HEK293T (cell line): ENCODE measurements at regions of chr20 and their contacts with region 1.

Region 1: DNA sequence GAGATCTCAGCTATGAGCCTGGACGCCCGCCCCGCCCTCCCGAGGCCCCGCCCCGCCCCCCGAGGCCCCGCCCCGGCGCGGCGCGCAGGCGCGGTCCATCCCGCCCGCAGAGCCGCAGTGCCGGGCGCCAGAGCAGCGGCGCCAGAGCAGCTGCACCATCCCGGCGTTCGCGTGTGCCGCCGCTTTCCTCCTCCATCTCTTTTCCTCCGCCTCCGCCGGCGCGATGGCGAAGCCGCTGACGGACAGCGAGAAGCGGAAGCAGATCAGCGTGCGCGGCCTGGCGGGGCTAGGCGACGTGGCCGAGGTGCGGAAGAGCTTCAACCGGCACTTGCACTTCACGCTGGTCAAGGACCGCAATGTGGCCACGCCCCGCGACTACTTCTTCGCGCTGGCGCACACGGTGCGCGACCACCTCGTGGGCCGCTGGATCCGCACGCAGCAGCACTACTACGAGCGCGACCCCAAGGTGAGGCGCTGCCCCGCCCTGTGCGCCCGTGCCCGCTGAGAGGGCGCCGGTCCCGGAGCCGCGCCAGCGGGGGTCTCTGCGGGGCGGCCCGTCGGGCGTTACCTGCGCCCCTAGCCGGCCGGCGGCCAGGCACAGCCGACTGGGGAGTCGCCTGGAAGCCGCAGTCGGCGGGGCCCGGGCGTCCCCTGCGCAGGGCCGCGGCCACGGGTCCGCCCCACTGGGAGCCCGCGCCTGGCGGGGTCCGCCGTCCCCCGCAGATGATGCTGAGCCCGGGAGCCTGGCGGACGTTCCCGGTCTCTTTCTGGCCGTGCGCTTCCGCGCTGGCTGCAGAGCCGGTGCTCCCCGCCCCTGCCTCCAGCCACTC is at the start of gene PYGB:
- DNase-seq: peak; percentile 91

Region 2: GRCh38 chr20:25195014-25195961 is 52.9 kb before region 1 on chr20 and contains the start of gene ENTPD6:
- CTCF ChIA-PET with region 1: no interaction called
- POLR2A ChIA-PET with region 1: interaction called, 17 read pairs
- DNase-seq: peak; percentile 96

Region 3: DNA sequence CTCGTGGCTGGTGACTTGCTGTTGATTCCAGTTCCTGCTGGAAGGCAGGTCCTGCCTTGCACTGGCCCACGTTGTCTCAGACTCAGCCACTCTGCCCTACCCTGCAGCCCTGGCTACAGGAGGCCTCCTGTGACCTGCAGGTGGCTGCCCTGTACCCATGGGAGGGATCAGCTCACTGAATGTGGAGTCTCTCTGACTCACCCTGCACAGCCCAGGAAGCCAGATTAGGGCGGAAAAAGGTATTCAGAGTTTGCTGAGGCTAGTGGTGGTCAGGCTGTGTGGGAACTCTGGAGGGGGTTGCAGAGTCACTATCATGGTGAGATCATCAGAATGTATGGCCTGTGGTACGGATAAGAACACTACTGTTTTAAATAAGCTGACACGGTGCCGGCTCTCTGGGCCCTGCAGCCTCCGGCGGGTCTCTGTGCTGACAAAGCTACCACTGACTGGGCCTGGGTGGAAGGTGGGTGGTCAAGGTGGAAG is 25.0 kb before region 1 on chr20:
- CTCF ChIA-PET with region 1: interaction called, 3 read pairs
- POLR2A ChIA-PET with region 1: interaction called, 17 read pairs
- DNase-seq: peak; percentile 39

Region 4: DNA sequence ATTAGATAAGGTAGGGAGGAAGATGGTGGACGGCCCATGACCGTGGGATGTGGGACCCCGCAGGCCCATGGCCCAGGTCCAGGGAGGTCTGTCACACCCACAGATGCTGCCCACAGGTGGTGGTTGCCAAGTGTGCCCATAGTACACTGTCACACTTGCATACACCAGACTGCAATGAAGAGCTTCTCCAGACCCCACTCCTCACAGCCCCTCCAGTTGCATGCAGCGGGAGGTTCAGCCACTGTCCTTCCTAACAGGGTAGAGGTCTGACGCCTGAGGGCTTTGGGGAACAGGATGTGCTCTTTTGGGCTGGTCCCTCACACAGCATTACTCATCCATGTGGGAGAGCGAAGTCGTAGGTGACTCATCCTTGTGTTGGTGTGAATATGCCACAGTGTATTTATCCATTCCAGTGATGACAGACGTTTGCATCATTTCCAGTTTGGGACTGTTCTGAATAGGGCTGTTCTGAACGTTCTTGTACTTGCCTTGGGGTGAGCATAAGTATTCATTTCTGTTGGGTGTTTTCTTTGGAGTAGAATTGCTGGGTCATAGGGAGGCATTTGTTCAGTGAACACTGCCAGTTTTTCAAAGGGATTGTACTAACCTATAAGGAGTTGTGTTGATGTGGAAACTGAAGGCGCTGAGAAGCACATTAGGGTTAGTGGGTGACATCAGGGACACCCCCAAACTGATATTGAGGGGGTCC is 10.4 kb before region 1 on chr20:
- CTCF ChIA-PET with region 1: interaction called, 8 read pairs
- POLR2A ChIA-PET with region 1: interaction called, 22 read pairs
- DNase-seq: no peak

Region 5: DNA sequence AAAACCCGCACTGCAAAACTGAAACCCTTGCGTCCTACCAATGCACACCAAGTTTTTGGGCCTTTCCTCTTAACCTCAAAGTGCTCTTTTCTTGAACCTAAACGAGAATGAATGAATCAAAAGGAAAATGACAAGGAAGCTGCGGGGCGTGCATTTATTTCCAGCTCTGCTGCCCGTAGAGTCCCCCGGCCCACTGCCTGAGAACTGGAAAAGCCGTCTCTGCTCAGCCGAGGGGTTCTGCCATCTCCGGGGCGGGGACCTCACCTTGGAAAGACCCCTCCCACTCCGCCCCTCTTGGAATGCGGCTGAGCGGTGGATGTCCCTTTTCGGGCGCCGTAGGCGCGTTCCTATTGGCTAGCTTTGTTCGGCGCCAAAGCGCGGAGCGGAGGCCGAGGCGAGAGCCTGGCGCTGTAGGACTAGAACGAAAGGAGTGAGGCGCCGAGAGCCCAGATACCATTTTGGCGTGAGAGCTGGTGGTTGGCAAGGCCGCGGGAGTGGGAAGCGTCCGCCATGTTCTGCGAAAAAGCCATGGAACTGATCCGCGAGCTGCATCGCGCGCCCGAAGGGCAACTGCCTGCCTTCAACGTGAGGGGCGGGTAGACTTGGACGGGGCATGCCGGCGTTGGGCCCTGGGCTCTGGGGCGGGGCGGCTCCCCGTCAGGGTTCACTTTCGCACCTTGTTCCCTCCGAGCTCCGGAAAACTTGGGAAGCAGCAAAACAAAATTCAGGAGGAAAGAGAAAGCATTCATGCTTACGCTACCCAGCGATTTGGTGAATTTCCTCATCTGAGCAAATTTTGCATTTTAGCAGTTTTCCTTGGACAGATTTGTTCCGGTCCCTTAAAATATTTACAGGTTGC is 159.4 kb after region 1 on chr20 and contains the start of gene GINS1:
- CTCF ChIA-PET with region 1: no interaction called
- POLR2A ChIA-PET with region 1: interaction called, 10 read pairs
- DNase-seq: peak; percentile 89